ENCODE measurements at regions of chr16 and their contacts with region 1.

Region 1: DNA sequence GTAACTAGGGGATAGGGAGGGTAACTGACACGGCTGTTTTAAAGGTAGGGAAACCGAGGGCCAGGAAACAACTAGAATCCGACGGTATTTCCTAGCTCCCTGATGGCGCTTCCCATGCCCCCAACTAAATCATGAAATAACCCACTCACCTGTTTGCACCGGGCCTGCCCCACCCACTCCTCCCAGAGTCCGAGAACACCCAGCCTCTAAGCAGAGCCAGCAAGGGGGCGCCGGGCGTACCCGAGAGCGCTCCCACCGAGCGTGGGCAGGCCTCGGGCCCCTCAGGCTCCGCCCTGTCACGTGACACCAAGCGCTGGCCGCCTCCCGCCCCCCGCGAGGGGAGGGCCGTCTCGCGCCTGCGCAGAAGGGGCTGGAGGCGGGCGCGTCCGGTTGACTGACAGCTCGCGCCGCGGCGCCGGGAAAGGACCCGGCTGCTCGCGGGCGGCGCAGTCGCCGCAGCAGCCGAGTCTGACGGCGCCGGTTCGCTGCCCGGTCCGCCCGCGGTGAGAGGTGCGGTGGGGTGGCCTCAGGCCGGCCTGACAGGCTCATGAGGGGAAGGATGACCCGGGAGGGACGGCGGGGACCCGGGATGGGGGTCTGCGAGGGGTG is at the start of gene KIAA0513:
- DNase-seq: peak; percentile 97
- H3K4me3 ChIP-seq: peak within 1 kb of the TSS; percentile 74
- H3K27ac ChIP-seq: no peak within 1 kb of the TSS
- H3K4me1 ChIP-seq: peaks cover 13% of the 10 kb centered on the region
- CTCF ChIP-seq: peak; percentile 43
- total RNA-seq, gene KIAA0513: 0.59 and 4.8 TPM in 2 replicates

Region 2: DNA sequence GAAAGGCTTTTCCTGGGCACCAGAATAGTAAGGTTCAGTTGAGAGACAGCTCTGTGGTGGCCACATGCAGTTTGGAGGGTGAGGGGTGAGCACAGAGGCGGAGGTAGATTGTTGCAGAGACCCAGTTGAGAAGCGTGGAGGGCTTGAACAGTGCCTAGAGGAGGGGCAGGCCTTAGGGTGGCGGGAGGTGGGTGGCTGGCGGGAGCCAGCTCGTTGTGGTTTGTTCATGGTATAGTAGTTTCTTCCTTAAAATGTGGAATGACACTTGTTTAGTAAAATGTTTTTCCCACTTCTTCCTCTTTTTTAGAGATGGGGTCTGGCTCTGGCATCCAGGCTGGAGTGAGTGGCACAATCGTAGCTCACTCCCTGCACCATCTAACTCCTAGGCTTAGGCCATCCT is 313.4 kb before region 1 on chr16:
- CTCF ChIA-PET with region 1: no interaction called
- POLR2A ChIA-PET with region 1: no interaction called
- intact Hi-C with region 1: no loop called
- DNase-seq: no peak
- H3K4me3 ChIP-seq: no peak overlapping the region
- H3K27ac ChIP-seq: no peak overlapping the region
- H3K4me1 ChIP-seq: peaks cover 29% of the 10 kb centered on the region
- CTCF ChIP-seq: no peak

Region 3: DNA sequence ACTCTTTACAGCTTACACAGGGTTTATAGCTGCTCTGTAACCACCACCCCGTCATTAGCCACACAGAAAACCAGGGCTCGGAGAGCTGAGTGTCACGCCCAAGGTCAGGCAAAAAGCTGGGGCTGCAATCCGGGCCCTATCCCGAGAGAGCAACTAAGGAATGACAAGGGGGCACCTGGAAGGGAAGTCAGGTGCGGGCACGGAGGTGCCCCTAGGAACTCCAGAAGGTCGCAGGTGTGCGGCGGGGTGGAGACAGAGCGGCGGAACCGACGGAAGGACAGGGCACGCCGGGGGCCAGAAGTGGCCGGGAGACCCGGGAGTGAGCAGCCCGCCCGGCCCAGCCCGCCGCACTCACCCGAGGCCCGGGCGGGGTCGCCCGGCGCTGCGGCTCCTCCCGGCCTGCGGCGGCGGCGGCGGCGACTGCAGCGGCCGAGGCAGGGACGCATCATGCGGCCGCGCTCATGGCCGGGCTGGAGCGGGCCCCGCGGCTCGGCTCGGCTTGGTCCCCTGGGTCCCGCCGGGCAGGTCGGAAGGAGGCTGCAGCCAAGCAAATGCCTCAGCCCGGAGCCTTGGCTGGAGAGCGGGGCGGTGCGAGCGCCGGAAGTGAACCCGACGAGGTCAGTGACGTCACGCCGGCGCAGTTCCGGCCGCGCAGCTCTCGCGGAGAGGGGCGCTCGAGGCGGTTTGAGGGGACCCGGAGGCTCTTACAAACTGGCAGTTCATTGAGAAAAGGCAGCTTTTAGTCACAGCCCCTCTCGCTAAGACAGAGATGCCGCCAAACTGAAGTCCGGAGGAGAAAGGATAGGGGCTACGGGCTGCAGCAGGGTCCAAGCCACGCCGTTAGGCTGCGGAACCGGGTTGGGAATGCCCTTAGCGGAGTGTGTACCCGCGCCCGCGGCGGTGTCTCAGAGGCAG is 16.3 kb before region 1 on chr16 and contains the start of gene ZDHHC7:
- CTCF ChIA-PET with region 1: no interaction called
- POLR2A ChIA-PET with region 1: interaction called, 25 read pairs
- intact Hi-C with region 1: no loop called
- DNase-seq: peak; percentile 91
- H3K4me3 ChIP-seq: peak within 1 kb of the TSS; percentile 98
- H3K27ac ChIP-seq: peak within 1 kb of the TSS; percentile 72
- H3K4me1 ChIP-seq: peaks cover 8% of the 10 kb centered on the region
- CTCF ChIP-seq: peak; percentile 38; the same call in 1 of the 2 replicates
- total RNA-seq, gene ZDHHC7: 17.3 and 24.3 TPM in 2 replicates